Upper lobe of right lung (tissue), 1 donor: ENCODE measurements at regions of chr2 and their contacts with region 1.

Region 1: DNA sequence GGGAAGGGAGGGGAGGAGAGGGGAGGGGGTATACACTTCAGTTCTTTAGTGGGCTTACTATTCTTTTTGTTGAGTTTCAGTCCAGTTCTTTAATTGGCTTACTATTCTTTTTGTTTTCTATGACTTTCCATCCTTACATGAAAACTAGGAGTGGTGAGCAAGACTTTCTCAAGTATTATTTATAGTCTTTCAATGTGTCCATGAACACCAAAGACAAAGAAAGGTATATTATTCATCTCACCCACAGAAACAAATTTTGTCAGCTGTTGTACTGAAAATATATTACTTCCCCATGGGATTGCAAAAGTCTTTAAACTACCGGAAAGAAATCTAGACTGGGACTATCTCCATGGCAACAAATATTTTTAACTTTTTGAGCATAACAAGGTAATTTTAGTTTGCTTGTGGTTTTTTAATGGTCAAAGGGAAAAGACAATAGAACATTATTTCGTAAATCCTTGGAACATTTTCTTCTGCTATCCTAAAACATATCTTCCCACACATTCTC is 17.6 kb downstream of the ADAM17 start:
- DNase-seq: no peak
- ATAC-seq: peak; percentile 79
- H3K4me3 ChIP-seq: no peak overlapping the region
- H3K27ac ChIP-seq: peak overlapping the region; percentile 74
- H3K4me1 ChIP-seq: peaks cover 6% of the 10 kb centered on the region
- H3K27me3 ChIP-seq: no peaks in the 10 kb centered on the region
- CTCF ChIP-seq: no peak

Region 2: DNA sequence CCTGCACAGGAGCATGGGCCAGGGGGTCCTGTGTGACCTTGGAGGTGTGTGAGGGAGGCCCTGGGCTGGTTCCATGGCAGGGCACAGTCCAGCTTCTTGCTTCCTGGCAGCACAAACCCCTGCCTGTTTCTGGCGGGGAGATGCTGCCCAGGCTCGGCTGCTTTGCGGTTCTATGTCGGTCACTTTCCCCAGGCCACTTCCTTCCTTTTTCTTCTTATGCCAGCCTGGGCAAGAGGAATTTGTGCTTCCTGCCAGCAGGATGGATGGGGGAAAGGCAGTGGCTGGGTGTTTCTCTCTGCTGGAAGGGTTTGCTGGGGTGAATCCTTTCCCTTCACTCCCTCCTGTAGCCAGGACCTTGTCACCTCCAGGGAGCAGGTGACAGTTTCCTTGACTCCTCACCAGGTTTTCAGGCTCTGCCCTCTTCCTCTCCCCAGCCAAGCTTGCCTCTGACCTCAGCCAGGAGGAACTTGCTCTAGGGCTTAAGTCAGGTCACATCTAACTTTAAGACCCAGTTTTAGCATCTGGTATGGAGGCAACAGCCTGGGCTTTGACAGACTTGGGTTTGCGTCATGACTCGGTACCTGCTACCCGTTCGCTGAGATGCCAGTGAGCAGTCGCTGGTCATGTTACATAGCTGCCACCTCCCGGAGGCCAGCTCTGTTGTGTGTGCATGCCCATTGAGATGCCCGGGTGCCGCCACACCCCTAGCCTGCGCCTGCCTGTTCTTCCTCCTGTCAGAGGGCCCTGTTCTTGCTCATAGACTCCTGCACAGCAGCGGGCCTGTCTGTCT is 307.0 kb before region 1 on chr2:
- intact Hi-C with region 1: no loop called
- DNase-seq: no peak
- ATAC-seq: peak; percentile 38
- H3K4me3 ChIP-seq: no peak overlapping the region
- H3K27ac ChIP-seq: no peak overlapping the region
- H3K4me1 ChIP-seq: peaks cover 70% of the 10 kb centered on the region
- H3K27me3 ChIP-seq: no peaks in the 10 kb centered on the region
- CTCF ChIP-seq: no peak

Region 3: GRCh38 chr2:9630749-9631483 is 92.9 kb after region 1 on chr2 and contains the start of gene YWHAQ:
- intact Hi-C with region 1: no loop called
- DNase-seq: peak; percentile 99
- ATAC-seq: peak; percentile 98
- H3K4me3 ChIP-seq: peak within 1 kb of the TSS; percentile 92
- H3K27ac ChIP-seq: peak within 1 kb of the TSS; percentile 94
- H3K4me1 ChIP-seq: peaks cover 35% of the 10 kb centered on the region
- H3K27me3 ChIP-seq: no peaks in the 10 kb centered on the region
- CTCF ChIP-seq: no peak
- total RNA-seq, gene YWHAQ: 191 TPM

Region 4: DNA sequence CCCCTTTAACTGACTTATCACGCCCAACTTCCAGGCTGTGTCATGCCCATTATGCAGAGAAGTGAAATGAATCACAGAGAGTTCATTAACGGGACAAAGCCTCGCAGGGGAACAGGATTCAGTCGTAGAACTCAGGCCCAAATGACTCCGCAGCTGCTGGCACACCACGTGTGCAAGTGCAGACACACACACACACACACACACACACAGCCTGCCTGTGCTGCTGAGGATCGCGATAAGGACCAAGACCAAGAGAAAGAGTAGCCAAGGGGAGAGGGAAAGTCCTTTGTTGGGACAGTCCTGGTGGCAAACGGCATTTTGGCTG is 215.2 kb after region 1 on chr2:
- intact Hi-C with region 1: loop called (anchors 10 kb)
- DNase-seq: peak; percentile 66
- ATAC-seq: peak; percentile 81
- H3K4me3 ChIP-seq: no peak overlapping the region
- H3K27ac ChIP-seq: no peak overlapping the region
- H3K4me1 ChIP-seq: peaks cover 26% of the 10 kb centered on the region
- H3K27me3 ChIP-seq: no peaks in the 10 kb centered on the region
- CTCF ChIP-seq: no peak